IMR-90 (cell line): ENCODE measurements at regions of chr17 and their contacts with region 1.

Region 1: GRCh38 chr17:9307292-9308042 is 268.2 kb downstream of the STX8 start:
- DNase-seq: peak; percentile 22
- ATAC-seq: peak; percentile 54; the same call in 1 of the 2 replicates
- H3K4me3 ChIP-seq: no peak overlapping the region
- H3K27ac ChIP-seq: no peak overlapping the region
- H3K4me1 ChIP-seq: no peaks in the 10 kb centered on the region; the same call in none of the 2 replicates
- H3K27me3 ChIP-seq: no peaks in the 10 kb centered on the region
- CTCF ChIP-seq: no peak
- POLR2A ChIP-seq: no peak
- RAD21 ChIP-seq: no peak

Region 2: GRCh38 chr17:9283909-9284308 is 23.6 kb before region 1 on chr17:
- CTCF ChIA-PET with region 1: no interaction called
- POLR2A ChIA-PET with region 1: no interaction called
- dilution Hi-C with region 1: no loop called
- in situ Hi-C with region 1: no loop called
- intact Hi-C with region 1: loop called (anchors 1 kb)
- DNase-seq: no peak
- ATAC-seq: 0 out of 2 replicates have a peak, but pooled peaks have one; percentile 14
- H3K4me3 ChIP-seq: no peak overlapping the region
- H3K27ac ChIP-seq: no peak overlapping the region
- H3K4me1 ChIP-seq: peaks cover 4% of the 10 kb centered on the region; the same call in 1 of the 2 replicates
- H3K27me3 ChIP-seq: no peaks in the 10 kb centered on the region
- CTCF ChIP-seq: no peak
- POLR2A ChIP-seq: no peak
- RAD21 ChIP-seq: no peak

Region 3: DNA sequence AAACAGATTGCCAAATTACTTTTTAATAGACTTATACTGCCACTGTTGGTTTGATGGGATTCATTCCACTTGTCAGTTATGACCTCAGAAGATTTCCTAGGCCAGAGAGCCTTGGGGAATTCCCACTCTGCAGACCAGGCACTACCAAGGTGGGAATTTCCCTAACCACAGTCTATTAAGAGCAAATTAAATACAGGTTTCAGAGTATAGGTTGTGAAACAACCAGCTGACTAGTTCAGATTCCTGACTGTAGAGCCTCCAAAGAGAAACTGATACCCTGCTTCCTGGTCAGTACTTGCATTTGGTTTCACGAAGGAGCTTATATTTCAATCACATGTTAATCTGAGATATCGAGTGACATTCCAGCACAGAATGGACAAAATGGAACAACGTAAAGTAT is 81.6 kb after region 1 on chr17:
- CTCF ChIA-PET with region 1: no interaction called
- POLR2A ChIA-PET with region 1: no interaction called
- dilution Hi-C with region 1: no loop called
- in situ Hi-C with region 1: no loop called
- intact Hi-C with region 1: loop called (anchors 10 kb)
- DNase-seq: peak; percentile 97
- ATAC-seq: peak; percentile 89
- H3K4me3 ChIP-seq: no peak overlapping the region
- H3K27ac ChIP-seq: no peak overlapping the region
- H3K4me1 ChIP-seq: no peaks in the 10 kb centered on the region
- H3K27me3 ChIP-seq: no peaks in the 10 kb centered on the region
- CTCF ChIP-seq: no peak
- POLR2A ChIP-seq: no peak
- RAD21 ChIP-seq: no peak